ENCODE measurements at regions of chr15 and their contacts with region 1.

Region 1: GRCh38 chr15:50819344-50819743 is 53.8 kb upstream of the SPPL2A start:
- DNase-seq: no peak
- ATAC-seq: no peak
- H3K4me3 ChIP-seq: no peak overlapping the region
- H3K27ac ChIP-seq: no peak overlapping the region
- H3K4me1 ChIP-seq: no peaks in the 10 kb centered on the region
- H3K27me3 ChIP-seq: no peaks in the 10 kb centered on the region
- CTCF ChIP-seq: no peak
- EP300 ChIP-seq: no peak
- POLR2A ChIP-seq: no peak
- RAD21 ChIP-seq: no peak

Region 2: GRCh38 chr15:50864873-50865272 is 45.5 kb after region 1 on chr15:
- CTCF ChIA-PET with region 1: no interaction called
- POLR2A ChIA-PET with region 1: no interaction called
- in situ Hi-C with region 1: no loop called
- intact Hi-C with region 1: loop called (anchors 5 kb)
- DNase-seq: no peak
- ATAC-seq: no peak
- H3K4me3 ChIP-seq: no peak overlapping the region
- H3K27ac ChIP-seq: no peak overlapping the region
- H3K4me1 ChIP-seq: no peaks in the 10 kb centered on the region
- H3K27me3 ChIP-seq: no peaks in the 10 kb centered on the region; a peak in 1 of 5 replicates
- CTCF ChIP-seq: no peak
- EP300 ChIP-seq: no peak
- POLR2A ChIP-seq: no peak
- RAD21 ChIP-seq: no peak

Region 3: DNA sequence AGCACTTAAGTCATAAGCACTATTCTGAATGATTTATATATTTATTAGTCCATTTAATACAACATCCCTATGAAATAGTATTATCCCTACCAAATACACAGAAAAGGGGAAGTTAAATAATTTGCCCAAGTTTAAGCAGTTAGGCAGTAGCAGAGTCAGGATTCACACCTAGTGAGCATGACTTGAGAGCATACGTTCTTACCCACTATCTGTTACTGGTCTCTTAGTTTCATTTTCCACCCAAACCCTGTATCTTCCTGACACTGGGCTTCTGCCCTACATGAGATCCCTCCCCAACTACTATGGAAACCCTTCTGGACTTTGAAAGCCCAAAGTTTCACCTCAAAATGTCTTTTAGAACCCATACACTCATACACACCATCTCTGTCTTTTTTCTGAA is 1864.2 kb after region 1 on chr15:
- CTCF ChIA-PET with region 1: no interaction called
- POLR2A ChIA-PET with region 1: no interaction called
- in situ Hi-C with region 1: no loop called
- intact Hi-C with region 1: no loop called
- DNase-seq: no peak
- ATAC-seq: no peak
- H3K4me3 ChIP-seq: no peak overlapping the region
- H3K27ac ChIP-seq: no peak overlapping the region
- H3K4me1 ChIP-seq: no peaks in the 10 kb centered on the region
- H3K27me3 ChIP-seq: no peaks in the 10 kb centered on the region
- CTCF ChIP-seq: no peak
- EP300 ChIP-seq: no peak
- POLR2A ChIP-seq: no peak
- RAD21 ChIP-seq: no peak

Measured in HepG2 (cell line).